ENCODE measurements at regions of chr16 and their contacts with region 1.

Region 1: GRCh38 chr16:11586856-11587642 is at the start of gene LITAF:
- DNase-seq: peak; percentile 63
- H3K4me3 Mint-ChIP-seq: peak within 1 kb of the TSS; percentile 94
- H3K27ac Mint-ChIP-seq: peak within 1 kb of the TSS; percentile 98
- H3K4me1 Mint-ChIP-seq: peaks cover 32% of the 10 kb centered on the region
- H3K27me3 Mint-ChIP-seq: no peaks in the 10 kb centered on the region
- total RNA-seq, gene LITAF: 171 to 174 TPM

Region 2: GRCh38 chr16:11094072-11094856 is 492.8 kb before region 1 on chr16:
- CTCF ChIA-PET with region 1: no interaction called
- intact Hi-C with region 1: loop called (anchors 10 kb)
- DNase-seq: peak; percentile 88
- H3K4me3 Mint-ChIP-seq: peak overlapping the region; percentile 11
- H3K27ac Mint-ChIP-seq: peak overlapping the region; percentile 95
- H3K4me1 Mint-ChIP-seq: peaks cover 68% of the 10 kb centered on the region
- H3K27me3 Mint-ChIP-seq: no peaks in the 10 kb centered on the region

Region 3: GRCh38 chr16:11560701-11561449 is 26.2 kb before region 1 on chr16:
- CTCF ChIA-PET with region 1: interaction called, 4 read pairs
- intact Hi-C with region 1: loop called (anchors 1 kb)
- DNase-seq: peak; percentile 84
- H3K4me3 Mint-ChIP-seq: peak overlapping the region; percentile 76
- H3K27ac Mint-ChIP-seq: peak overlapping the region; percentile 96
- H3K4me1 Mint-ChIP-seq: peaks cover 82% of the 10 kb centered on the region
- H3K27me3 Mint-ChIP-seq: no peaks in the 10 kb centered on the region

Region 4: DNA sequence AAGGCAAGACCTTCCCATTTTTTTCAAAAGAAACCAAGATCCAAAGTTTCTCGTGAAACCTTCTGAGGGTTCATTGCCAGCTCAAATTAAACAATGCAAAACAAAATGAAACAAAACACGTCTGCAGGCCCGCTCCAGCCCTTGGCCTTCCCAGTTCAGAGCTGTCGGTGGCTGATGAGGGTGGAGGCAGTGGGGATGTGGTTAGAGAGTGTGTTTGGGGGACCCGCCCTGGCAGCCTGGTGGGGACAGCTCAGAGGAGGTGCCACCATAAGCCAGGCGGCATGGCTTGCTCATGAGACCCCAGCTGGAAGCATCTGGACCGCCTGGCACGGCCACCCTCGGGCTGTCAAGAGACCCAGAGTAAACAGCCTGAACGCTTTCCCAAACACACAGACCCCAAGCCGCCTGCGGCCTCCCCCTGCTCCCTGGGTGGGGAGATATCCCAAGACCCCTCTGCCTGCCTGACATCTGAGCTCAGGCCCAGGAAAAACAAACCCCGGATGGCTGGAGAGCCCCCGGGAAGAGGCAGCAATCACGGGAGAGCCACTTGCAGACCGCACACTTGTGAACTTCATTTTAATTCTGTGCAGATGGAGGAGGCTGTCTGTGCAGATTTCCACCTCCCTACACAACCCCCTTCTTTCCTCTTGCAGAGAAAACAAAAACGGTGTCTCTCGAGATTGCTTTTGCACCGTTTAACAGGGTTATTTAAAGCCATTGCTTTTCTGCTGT is 35.0 kb after region 1 on chr16:
- CTCF ChIA-PET with region 1: no interaction called
- intact Hi-C with region 1: loop called (anchors 1 kb)
- DNase-seq: peak; percentile 43
- H3K4me3 Mint-ChIP-seq: peak overlapping the region; percentile 70
- H3K27ac Mint-ChIP-seq: peak overlapping the region; percentile 65
- H3K4me1 Mint-ChIP-seq: peaks cover 61% of the 10 kb centered on the region
- H3K27me3 Mint-ChIP-seq: no peaks in the 10 kb centered on the region

Region 5: DNA sequence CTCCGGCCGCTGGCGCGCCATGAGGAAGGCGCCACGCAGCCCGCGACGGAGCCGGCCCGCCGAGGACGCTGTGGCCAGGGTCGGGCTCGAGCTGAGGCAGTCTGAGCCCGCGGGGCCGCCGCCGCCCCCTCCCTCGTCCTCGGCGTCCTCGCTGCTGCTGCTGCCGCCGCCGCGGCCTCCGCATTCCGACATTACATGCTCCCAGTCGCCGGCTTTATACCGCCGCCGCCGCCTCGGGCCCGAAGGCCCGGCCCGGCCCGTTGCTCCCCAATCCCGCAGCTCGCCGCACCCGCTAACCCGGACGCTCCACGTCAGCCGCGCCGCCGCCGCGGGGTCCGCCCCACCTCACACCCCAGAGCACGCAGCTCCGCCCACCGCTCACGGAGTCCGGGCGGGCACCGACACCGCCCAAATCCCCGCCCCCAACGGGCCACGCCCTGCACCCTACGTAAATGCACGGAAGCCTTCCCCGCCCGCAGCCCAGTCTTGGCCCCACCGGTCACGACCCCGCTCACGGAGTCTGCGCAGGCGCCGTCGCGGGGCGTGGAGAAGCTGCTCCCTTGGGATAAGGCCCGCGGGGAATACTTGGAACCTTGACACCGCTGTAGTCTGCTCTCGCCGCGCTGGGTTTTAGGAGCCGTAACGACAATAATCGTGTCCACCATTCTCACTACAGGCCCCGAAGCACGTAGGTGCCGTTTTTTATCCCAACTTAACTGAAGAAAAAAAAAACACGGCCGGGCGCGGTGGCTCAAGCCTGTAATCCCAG is 155.7 kb after region 1 on chr16 and contains the start of gene TXNDC11:
- CTCF ChIA-PET with region 1: no interaction called
- intact Hi-C with region 1: loop called (anchors 1 kb)
- DNase-seq: peak; percentile 99
- H3K4me3 Mint-ChIP-seq: peak within 1 kb of the TSS; percentile 91
- H3K27ac Mint-ChIP-seq: peak within 1 kb of the TSS; percentile 96
- H3K4me1 Mint-ChIP-seq: peaks cover 48% of the 10 kb centered on the region
- H3K27me3 Mint-ChIP-seq: no peaks in the 10 kb centered on the region
- total RNA-seq, gene TXNDC11: 24.6 to 25.5 TPM

Region 6: DNA sequence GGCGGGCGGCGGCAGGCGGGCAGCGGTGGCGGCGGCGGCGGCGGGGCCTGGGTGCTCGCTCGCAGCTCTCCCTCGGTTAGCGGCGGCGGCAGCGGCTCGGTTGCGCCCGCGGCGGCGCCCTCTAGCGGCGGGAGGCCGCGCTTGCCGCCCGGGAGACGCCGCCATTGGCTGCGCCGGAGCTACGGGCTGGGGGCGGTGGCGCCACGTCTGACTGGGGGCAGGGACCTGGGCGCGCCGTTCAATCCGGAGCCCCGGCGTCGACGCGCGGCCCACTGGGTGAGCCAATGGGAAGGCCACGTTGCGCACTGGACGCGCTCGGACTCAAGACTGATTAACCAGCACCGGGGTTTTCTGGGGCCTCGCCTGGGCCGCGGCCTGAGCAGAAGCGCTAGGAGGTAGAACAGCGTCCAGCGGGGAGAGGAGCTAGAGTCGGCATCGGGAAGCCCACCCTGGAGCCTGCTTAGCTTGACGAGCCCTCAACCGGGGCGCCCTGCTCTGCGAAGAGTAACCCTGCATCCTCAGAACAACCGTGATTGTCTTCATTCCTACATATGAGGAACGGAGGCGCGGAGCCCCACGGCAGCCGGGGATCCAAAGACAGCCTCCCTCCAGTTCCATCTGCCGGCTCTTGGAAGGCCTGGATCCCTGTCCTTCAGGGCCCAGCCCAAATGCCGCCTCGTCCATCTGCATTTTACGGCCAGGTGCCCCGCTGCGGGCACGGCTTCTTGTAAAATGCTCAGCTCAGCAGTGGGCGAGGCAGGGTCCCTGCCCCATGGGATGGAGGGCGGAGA is 210.3 kb after region 1 on chr16 and contains the start of gene ZC3H7A:
- CTCF ChIA-PET with region 1: no interaction called
- intact Hi-C with region 1: loop called (anchors 5 kb)
- DNase-seq: peak; percentile 95
- H3K4me3 Mint-ChIP-seq: peak within 1 kb of the TSS; percentile 92
- H3K27ac Mint-ChIP-seq: peak within 1 kb of the TSS; percentile 93
- H3K4me1 Mint-ChIP-seq: peaks cover 72% of the 10 kb centered on the region
- H3K27me3 Mint-ChIP-seq: no peaks in the 10 kb centered on the region
- total RNA-seq, gene ZC3H7A: 123 to 127 TPM

Region 7: DNA sequence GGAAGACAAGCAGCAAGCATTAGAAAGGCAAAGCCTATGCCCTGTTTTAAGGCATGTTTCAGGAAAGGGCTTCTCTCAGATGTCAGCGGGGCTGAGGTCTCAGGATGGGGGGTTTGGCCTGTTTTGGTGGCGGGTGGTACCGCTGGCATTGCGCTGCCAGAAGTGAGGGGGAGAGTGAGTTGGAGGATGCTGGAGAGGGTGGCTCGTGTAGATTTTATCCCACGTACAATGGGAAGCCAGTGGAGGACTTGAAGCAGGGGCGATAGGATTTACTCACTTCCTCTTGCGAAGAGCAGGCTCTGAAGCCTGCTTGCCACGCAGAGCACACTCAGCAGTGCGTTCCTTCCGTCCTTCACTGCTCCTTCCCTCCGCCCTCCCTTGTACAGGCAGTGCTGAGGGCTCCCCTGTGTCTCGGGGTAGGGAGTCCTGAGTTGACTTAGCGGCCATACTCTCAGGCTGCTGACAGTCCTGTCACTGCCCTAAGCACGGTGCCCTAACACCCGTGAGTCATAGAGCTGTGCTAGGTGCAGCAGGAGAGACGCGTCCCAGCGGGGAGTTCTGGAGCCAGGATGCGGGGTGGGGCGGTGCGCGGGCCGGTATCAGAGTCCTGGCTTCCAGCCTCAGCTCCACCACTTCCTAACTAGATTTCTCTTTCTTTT is 502.6 kb after region 1 on chr16:
- CTCF ChIA-PET with region 1: no interaction called
- intact Hi-C with region 1: loop called (anchors 10 kb)
- DNase-seq: peak; percentile 77
- H3K4me3 Mint-ChIP-seq: peak overlapping the region; percentile 78
- H3K27ac Mint-ChIP-seq: peak overlapping the region; percentile 88
- H3K4me1 Mint-ChIP-seq: peaks cover 35% of the 10 kb centered on the region
- H3K27me3 Mint-ChIP-seq: no peaks in the 10 kb centered on the region

Measured in activated naive CD4-positive, alpha-beta T cell treated with anti-CD3 and anti-CD28 coated beads for 36 hours (primary cell).